Activated CD4-positive, alpha-beta memory T cell treated with anti-CD3 and anti-CD28 coated beads for 36 hours (primary cell): ENCODE measurements at regions of chr4 and their contacts with region 1.

Region 1: DNA sequence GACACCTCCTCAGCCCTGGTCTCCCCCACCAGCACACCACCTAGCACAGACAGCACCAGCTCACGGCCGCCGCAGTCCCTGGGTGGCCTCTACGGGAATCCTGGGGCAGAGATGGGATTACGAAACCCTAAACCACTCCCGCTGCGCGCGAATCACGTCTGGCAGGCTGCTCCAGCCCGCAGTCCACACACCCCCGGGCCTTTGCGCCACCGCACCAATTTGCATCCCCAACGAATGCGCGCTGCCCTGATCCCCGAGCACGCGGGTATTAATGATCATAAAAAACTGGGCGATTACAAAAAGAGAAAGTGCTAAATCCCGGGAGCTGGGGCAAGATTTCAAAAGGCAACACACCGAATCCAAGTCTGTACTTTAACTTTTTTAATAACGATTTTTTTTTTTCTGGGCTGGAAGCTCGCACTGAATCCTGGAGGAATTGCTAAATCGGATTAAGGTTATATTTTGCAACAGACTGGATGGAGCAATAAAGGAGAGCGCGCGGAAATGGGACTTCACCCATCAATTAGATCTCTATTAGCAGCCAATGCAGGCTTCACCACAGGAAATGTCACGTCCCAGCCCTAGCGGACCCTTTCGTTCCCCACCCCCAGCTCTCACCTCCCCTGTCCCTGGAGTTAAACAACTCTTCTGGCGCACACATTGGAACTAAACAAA is 69.8 kb upstream of the TMEM33 start:
- DNase-seq: no peak
- H3K4me3 Mint-ChIP-seq: no peak overlapping the region
- H3K27ac Mint-ChIP-seq: no peak overlapping the region
- H3K4me1 Mint-ChIP-seq: peaks cover 17% of the 10 kb centered on the region
- H3K27me3 Mint-ChIP-seq: peaks cover 56% of the 10 kb centered on the region

Region 2: DNA sequence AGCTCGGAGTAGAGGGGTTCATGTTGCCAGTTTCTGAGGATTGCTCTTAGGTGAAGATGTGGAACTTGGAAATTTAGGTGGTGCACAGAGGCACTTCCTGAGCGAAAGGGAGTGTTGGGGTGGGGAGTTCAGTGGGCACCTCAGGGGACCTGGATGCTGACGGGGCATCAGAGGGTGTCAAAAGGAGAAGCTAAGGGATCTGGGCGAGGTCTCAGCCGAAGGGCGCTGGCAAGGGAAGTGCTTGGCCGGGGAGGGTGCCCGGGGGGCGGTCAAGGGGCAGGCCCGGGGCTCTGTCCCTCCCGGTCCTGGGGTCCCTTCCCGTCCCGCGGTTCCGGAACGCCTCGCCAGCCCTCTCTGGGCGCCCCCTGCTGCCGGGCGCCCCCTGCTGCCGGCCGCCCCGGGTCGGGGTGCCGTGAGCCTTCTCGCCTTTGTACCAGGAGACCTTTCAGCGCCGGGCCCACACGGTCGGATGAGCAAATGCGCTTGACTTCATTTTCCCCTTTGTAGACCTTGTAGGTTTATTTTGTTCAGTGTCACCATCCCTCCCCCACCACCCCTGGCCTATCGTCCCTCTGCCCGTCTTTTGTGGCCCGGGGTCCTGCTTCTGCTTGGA is 113.9 kb before region 1 on chr4:
- CTCF ChIA-PET with region 1: no interaction called
- POLR2A ChIA-PET with region 1: no interaction called
- intact Hi-C with region 1: loop called (anchors 5 kb)
- DNase-seq: no peak
- H3K4me3 Mint-ChIP-seq: no peak overlapping the region
- H3K27ac Mint-ChIP-seq: no peak overlapping the region
- H3K4me1 Mint-ChIP-seq: no peaks in the 10 kb centered on the region
- H3K27me3 Mint-ChIP-seq: peaks cover 74% of the 10 kb centered on the region